Activated T-helper 2 cell treated with anti-CD3 and anti-CD28 coated beads, Interferon-gamma antibody, Interleukin-2, Interleukin-4, amounts not matched to agents 10 μg/mL and 5 μg/mL and 100 μg/mL, durations not matched to agents 14 hours and 24 hours and 36 hours (primary cell): ENCODE measurements at regions of chr2 and their contacts with region 1.

Region 1: GRCh38 chr2:64214281-64215115 is 70.3 kb upstream of the PELI1 start:
- DNase-seq: no peak
- H3K4me3 Mint-ChIP-seq: peak overlapping the region; percentile 50
- H3K27ac Mint-ChIP-seq: peak overlapping the region; percentile 95
- H3K4me1 Mint-ChIP-seq: peaks cover 44% of the 10 kb centered on the region
- H3K27me3 Mint-ChIP-seq: no peaks in the 10 kb centered on the region

Region 2: DNA sequence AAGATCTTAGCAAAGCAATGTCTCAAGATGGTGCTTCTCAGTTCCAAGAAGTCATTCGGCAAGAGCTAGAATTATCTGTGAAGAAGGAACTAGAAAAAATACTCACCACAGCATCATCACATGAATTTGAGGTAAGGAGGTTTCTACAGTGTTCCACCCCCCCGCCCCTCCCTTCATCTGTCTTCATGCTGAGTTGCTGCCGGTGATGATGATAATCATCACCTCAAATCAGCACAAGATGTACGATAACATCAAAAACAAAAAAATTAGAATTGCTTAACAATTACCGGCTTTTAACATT is 358.2 kb before region 1 on chr2:
- intact Hi-C with region 1: loop called (anchors 5 kb)
- DNase-seq: peak; percentile 39
- H3K4me3 Mint-ChIP-seq: peak overlapping the region; percentile 62
- H3K27ac Mint-ChIP-seq: peak overlapping the region; percentile 94
- H3K4me1 Mint-ChIP-seq: peaks cover 65% of the 10 kb centered on the region
- H3K27me3 Mint-ChIP-seq: no peaks in the 10 kb centered on the region

Region 3: DNA sequence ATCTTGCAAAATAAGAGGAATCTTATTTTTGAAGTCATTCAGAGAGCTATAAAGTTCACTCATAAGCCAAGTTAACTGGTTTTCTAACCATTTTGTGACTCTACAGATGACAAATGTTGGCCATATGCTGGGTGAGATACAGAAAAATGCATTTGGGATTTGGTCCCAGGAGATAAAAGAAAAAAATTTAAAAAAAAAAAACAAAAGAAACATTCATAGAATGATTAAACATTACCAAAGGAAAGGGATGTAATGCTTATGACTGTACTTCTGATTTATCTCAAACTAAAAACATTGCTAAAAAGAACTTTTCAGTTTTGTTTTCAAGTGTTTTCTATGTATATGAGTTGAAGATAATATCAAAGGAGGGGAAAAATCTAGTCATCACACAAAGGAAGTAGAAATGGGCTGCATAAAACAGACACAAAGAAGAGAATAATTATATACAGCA is 113.3 kb before region 1 on chr2:
- intact Hi-C with region 1: loop called (anchors 1 kb)
- DNase-seq: no peak
- H3K4me3 Mint-ChIP-seq: peak overlapping the region; percentile 27
- H3K27ac Mint-ChIP-seq: peak overlapping the region; percentile 89
- H3K4me1 Mint-ChIP-seq: peaks cover 44% of the 10 kb centered on the region
- H3K27me3 Mint-ChIP-seq: no peaks in the 10 kb centered on the region

Region 4: DNA sequence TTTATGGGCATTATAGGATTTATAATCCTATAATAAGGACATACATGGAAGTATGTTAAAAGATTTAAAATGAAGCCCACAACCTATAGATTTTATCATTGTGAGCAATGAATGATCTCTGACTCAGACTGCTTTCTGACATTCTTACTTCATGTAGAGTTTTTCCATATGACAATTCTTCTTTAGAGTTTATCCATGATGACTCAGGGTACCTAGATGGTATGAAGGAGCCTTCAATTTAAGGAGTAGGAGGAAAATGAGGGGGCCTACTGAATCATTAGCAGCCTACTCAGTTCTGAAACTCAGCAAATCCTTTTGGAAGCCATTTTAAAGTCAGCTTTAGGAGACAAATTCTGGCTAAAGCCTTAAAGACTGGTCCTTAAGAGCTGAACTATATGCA is 80.7 kb before region 1 on chr2:
- intact Hi-C with region 1: loop called (anchors 1 kb)
- DNase-seq: no peak
- H3K4me3 Mint-ChIP-seq: peak overlapping the region; percentile 26
- H3K27ac Mint-ChIP-seq: peak overlapping the region; percentile 68
- H3K4me1 Mint-ChIP-seq: peaks cover 69% of the 10 kb centered on the region
- H3K27me3 Mint-ChIP-seq: no peaks in the 10 kb centered on the region

Region 5: DNA sequence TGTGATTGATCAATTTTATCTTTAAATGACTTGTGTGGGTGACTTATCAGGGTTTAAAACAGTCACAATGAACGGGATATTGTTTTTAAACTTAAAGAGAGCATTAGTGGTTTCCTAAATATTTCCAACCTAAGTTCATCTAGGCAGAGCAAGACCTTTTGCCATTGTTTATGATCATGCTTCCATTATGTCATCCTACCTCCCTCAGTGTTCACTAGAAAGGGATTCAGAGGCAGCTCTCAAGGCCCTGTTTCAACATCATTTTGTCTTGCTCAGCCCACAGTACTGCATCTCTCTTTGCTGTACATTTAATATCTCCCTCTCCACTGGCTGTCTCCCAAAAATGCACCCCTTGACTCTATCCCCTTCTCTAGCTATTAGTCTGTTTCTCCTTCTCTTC is 48.8 kb before region 1 on chr2:
- intact Hi-C with region 1: loop called (anchors 1 kb)
- DNase-seq: no peak
- H3K4me3 Mint-ChIP-seq: no peak overlapping the region
- H3K27ac Mint-ChIP-seq: no peak overlapping the region
- H3K4me1 Mint-ChIP-seq: peaks cover 4% of the 10 kb centered on the region
- H3K27me3 Mint-ChIP-seq: no peaks in the 10 kb centered on the region

Region 6: GRCh38 chr2:64186699-64187605 is 27.5 kb before region 1 on chr2:
- intact Hi-C with region 1: no loop called
- DNase-seq: no peak
- H3K4me3 Mint-ChIP-seq: no peak overlapping the region
- H3K27ac Mint-ChIP-seq: no peak overlapping the region
- H3K4me1 Mint-ChIP-seq: peaks cover 6% of the 10 kb centered on the region
- H3K27me3 Mint-ChIP-seq: peaks cover 24% of the 10 kb centered on the region

Region 7: DNA sequence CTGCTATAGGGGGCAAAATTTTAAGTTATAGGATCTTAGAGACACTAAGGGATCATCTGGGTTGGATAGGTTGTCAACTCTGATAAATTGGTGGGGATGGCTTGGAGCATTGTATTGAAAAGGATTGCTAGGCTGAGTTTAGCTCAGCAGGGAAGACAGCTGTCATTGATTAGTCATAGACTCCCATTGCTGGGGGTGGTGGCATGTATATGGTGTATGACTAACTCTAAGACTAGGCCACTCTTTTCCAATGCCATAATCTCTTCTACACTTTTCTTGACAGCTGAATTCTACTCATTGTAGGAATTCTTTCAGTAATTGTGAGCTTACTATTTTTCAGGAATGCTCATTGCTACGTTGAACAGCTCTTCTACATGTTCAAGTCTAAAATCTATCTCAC is 11.0 kb after region 1 on chr2:
- intact Hi-C with region 1: loop called (anchors 1 kb)
- DNase-seq: no peak
- H3K4me3 Mint-ChIP-seq: no peak overlapping the region
- H3K27ac Mint-ChIP-seq: no peak overlapping the region
- H3K4me1 Mint-ChIP-seq: peaks cover 34% of the 10 kb centered on the region
- H3K27me3 Mint-ChIP-seq: peaks cover 5% of the 10 kb centered on the region

Region 8: DNA sequence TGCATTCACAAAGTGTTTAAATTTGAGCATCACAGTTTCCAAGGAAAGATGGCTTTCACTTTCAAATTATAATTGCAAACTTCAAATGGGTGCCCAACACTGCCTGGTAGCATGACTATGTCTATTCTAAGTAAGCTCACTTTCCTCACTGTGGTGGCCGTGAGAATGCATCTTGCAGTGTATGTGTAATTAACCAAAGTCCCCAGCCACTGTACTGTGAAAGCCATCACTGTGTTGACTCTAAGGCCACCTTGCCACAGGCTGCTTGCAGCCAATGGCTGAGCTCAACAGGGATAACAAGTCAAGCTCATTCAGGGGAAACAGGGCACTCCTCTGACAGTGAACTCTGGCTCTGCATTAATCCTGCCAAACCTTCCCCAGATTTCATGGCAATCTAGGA is 196.2 kb after region 1 on chr2:
- intact Hi-C with region 1: no loop called
- DNase-seq: no peak
- H3K4me3 Mint-ChIP-seq: no peak overlapping the region
- H3K27ac Mint-ChIP-seq: no peak overlapping the region
- H3K4me1 Mint-ChIP-seq: no peaks in the 10 kb centered on the region
- H3K27me3 Mint-ChIP-seq: peaks cover 9% of the 10 kb centered on the region

Region 9: DNA sequence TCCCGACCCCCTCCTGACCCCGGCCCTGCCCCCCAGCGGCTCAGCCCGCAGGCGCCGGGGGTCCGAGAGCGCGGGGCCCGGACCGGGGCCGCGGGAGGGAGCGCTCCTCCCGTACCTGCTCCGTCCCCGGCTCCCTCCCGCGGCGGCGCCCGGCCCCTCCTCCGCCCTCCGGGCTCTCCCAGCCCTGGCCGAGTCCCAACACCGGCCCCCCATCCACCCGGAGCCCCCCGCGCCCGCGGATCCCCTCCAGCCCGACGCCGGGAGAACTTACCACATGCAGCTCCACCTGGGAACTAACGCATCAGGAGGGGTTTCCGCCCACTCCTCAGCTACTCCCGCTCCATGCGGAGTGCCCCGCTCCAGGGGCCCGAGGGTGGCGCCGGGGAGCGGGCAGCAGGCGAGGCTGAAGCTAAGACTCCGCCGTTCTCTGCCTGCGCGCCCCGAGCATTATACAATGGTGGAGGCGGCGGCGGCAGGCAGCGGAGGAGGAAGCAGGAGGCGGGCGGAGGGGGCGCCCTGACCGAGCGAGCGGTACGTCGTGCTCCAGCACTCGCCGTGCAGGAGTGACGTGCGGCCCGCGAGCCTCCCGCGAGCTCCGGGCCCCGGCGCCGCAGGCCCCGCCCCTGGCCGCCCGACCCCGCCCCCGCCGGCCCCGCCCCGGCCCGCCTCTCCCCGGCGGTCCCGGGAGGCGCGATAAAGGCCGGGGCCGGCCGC is 439.0 kb after region 1 on chr2 and contains the start of gene SERTAD2:
- intact Hi-C with region 1: loop called (anchors 5 kb)
- DNase-seq: peak; percentile 82
- H3K4me3 Mint-ChIP-seq: peak within 1 kb of the TSS; percentile 91
- H3K27ac Mint-ChIP-seq: peak within 1 kb of the TSS; percentile 90
- H3K4me1 Mint-ChIP-seq: peaks cover 63% of the 10 kb centered on the region
- H3K27me3 Mint-ChIP-seq: no peaks in the 10 kb centered on the region
- total RNA-seq, gene SERTAD2: 29.2 and 31.0 TPM in 2 replicates